ENCODE measurements at regions of chr17 and their contacts with region 1.

Region 1: DNA sequence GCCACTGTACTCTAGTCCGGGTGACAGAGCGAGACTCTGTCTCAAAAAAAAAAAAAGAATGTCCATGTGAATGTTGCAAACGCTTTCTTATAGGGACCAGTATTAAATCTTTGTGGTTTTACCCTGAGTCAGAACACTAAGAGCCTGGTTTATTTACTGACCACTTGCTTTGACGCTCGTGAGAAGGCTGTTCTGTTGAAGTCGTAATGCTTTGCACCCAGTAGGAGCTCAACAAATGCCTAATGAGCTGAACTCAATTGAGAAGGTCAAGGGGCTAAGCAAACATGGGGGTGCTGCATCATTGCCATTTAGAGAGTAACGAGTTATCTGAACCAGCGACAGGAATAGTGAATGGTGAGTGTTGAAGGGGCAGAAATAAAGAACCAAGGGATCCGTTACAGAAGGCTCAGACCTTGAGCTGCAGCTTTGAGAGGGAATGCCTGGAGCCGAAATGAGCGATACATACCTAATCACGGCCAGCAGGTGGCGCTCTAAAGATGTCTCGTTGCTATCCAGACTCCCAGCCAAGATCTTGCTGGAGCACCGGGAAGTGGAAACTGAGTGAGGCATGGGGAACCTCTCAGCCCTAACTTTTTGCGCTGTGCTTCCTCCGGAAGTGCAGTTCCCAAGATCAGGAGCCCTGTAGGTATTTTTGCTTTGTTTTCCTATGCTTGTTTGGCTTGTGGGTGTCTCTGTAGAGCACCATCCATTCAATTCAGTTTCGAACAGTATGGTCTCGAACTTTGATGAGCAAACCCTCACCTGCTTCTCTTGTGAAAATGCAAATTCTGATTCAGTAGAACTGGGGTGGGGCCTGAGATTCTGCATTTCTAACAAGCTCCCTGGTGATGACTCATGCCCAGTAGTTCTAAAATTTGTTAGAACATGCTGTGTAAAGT is 12.6 kb upstream of the RNF222 start:
- DNase-seq: peak; percentile 47 to 88 (median 82)
- ATAC-seq: peak; percentile 92
- H3K4me3 ChIP-seq: no peak overlapping the region
- H3K4me3 Mint-ChIP-seq: no peak overlapping the region
- H3K27ac ChIP-seq: no peak overlapping the region
- H3K27ac Mint-ChIP-seq: no peak overlapping the region
- H3K4me1 ChIP-seq: peaks cover 3% of the 10 kb centered on the region
- H3K4me1 Mint-ChIP-seq: peaks cover 12% of the 10 kb centered on the region
- H3K27me3 ChIP-seq: peaks cover 0 to 3% of the 10 kb centered on the region in 2 experiments
- H3K27me3 Mint-ChIP-seq: peaks cover 9% of the 10 kb centered on the region
- CTCF ChIP-seq: peak; percentile 86

Region 2: GRCh38 chr17:8420041-8420934 is 10.1 kb after region 1 on chr17:
- CTCF ChIA-PET with region 1: interaction called, 15 read pairs
- POLR2A ChIA-PET with region 1: no interaction called
- intact Hi-C with region 1: no loop called
- DNase-seq: no peak
- ATAC-seq: no peak
- H3K4me3 ChIP-seq: no peak overlapping the region
- H3K4me3 Mint-ChIP-seq: no peak overlapping the region
- H3K27ac ChIP-seq: no peak overlapping the region
- H3K27ac Mint-ChIP-seq: no peak overlapping the region
- H3K4me1 ChIP-seq: no peaks in the 10 kb centered on the region
- H3K4me1 Mint-ChIP-seq: no peaks in the 10 kb centered on the region
- H3K27me3 ChIP-seq: peaks cover 0 to 7% of the 10 kb centered on the region in 2 experiments
- H3K27me3 Mint-ChIP-seq: peaks cover 52% of the 10 kb centered on the region
- CTCF ChIP-seq: no peak

Region 3: GRCh38 chr17:8740486-8740885 is 330.3 kb after region 1 on chr17:
- CTCF ChIA-PET with region 1: interaction called, 40 read pairs
- POLR2A ChIA-PET with region 1: interaction called, 6 read pairs
- intact Hi-C with region 1: no loop called
- DNase-seq: peak; percentile 19 to 88 (median 68)
- ATAC-seq: peak; percentile 66
- H3K4me3 ChIP-seq: peak overlapping the region; percentile 45 to 60
- H3K4me3 Mint-ChIP-seq: peak overlapping the region; percentile 79
- H3K27ac ChIP-seq: peak overlapping the region; percentile 51 to 65
- H3K27ac Mint-ChIP-seq: peak overlapping the region; percentile 75
- H3K4me1 ChIP-seq: peaks cover 14% of the 10 kb centered on the region
- H3K4me1 Mint-ChIP-seq: peaks cover 16% of the 10 kb centered on the region
- H3K27me3 ChIP-seq: no peaks in the 10 kb centered on the region
- H3K27me3 Mint-ChIP-seq: no peaks in the 10 kb centered on the region
- CTCF ChIP-seq: no peak

Region 4: DNA sequence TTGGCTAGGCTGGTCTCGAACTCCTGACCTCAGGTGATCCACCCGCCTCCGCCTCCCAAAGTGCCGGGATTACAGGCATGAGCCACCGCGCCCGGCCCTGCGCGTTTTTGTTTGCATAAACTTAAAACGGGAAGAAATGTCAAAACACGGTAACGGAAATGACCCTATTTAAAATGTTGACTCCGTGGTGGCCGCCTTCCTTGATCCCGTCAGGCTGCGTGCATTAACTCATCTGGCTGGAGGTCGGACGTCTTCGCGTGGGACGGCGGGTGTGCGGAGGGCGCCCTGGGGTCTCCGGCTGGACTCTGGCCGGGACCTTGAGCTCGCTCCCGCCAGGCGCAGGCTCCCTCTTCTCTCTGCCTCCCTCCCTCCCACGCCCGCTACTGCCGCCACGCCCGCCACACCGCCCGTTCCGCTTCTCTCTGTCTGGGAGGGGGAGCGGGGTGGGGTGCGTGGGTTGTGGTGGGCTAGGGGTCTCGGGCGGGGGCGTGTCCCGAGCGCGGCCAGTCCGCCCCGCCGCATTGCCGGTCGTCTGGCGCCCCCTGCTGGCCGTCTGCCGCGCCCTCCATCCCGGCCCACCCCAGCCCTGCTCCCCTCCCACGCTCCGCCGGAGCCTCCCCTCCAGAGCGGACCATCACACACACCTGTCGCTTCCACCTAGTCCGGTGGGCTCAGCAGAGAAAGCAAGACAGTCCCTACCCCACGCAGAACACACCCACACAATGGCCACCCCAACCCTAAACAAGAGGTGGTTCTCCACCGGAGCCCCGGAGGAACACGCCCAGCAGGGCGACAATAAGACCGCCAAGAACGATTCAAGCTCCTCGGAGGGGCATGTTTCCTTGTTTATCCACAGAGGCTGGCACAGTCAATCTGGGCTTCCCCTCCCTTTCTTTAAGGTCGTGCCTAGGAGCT is 335.6 kb after region 1 on chr17:
- CTCF ChIA-PET with region 1: interaction called, 40 read pairs
- POLR2A ChIA-PET with region 1: interaction called, 6 read pairs
- intact Hi-C with region 1: loop called in 1 of 2 experiments (anchors 1 kb)
- DNase-seq: peak; percentile 56 to 91 (median 82)
- ATAC-seq: peak; percentile 72
- H3K4me3 ChIP-seq: peak overlapping the region; percentile 74 to 77
- H3K4me3 Mint-ChIP-seq: peak overlapping the region; percentile 94
- H3K27ac ChIP-seq: peak overlapping the region; percentile 69 to 82
- H3K27ac Mint-ChIP-seq: peak overlapping the region; percentile 94
- H3K4me1 ChIP-seq: peaks cover 15% of the 10 kb centered on the region
- H3K4me1 Mint-ChIP-seq: peaks cover 25% of the 10 kb centered on the region
- H3K27me3 ChIP-seq: no peaks in the 10 kb centered on the region
- H3K27me3 Mint-ChIP-seq: no peaks in the 10 kb centered on the region
- CTCF ChIP-seq: peak; percentile 94

Region 5: DNA sequence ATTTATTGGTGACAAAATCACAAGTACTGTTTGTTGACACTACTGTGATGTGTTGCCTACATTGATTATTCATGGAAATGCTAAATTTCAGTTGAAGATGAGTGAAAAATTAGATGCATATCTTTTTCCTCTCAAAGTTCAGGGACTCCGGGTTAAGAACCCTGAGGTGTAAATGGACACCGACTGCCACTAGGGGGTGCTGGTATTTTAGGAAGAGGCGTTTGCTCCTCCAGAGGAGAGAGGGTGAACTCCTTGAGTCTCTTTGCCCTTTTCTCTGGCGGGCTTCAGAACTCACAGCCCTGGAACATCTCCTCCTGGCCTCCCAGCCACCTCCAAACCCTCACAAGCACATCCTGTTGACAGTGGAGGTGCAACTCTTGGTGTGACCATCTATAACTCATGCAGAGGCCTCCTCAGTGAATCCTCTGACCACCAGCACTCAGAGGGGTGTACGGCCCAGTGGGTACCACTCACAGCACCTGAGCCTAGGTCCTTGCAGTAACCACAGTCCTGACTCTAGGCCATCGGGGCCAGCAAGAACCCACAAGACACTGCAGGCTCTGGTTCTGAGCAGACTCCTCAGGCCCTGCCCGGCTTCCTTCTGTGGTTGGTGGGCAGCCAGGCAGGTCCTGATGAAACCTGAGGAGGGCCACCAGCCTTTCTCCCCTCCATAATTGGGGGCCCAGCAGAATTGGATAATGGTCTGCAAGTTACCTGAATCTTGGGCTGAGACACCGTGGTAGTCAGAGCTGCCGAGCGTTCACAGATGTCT is 581.5 kb after region 1 on chr17:
- CTCF ChIA-PET with region 1: no interaction called
- POLR2A ChIA-PET with region 1: no interaction called
- intact Hi-C with region 1: loop called in 1 of 2 experiments (anchors 10 kb)
- DNase-seq: peak; percentile 31 to 81 (median 71)
- ATAC-seq: peak; percentile 80
- H3K4me3 ChIP-seq: no peak overlapping the region
- H3K4me3 Mint-ChIP-seq: no peak overlapping the region
- H3K27ac ChIP-seq: no peak overlapping the region
- H3K27ac Mint-ChIP-seq: no peak overlapping the region
- H3K4me1 ChIP-seq: peaks cover 9% of the 10 kb centered on the region
- H3K4me1 Mint-ChIP-seq: peaks cover 7% of the 10 kb centered on the region
- H3K27me3 ChIP-seq: no peaks in the 10 kb centered on the region
- H3K27me3 Mint-ChIP-seq: no peaks in the 10 kb centered on the region
- CTCF ChIP-seq: peak; percentile 73